ENCODE measurements at regions of chr4 and their contacts with region 1.

Region 1: DNA sequence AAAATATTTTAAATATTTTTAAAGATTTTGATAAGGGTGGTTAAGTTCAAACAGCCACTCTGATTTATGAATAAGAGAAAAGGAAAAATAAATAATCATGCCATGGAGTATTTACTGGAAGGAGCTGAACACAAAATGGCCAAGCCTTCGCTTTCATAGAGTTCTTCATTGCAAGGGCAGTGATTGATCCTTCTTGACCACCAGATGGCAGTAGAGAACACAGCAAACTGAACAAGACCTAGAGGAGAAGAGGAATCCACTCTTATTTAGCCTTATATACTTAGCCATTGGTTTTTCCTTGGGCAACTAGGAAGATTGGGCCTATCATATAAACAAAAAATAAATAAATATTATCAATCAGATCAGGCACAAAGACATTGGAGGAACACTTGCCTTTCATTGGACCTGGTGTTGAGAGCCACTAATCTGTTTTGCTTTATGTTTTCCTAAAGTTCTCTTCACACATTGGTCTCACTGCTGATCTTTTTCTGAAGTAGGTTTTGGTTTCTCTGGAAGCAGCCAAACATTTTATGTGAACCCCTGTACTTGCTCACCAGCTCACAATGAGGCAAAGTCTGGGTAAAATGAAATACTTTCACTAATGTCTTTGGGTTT is 58.1 kb upstream of the PARM1 start:
- DNase-seq: no peak
- ATAC-seq: peak; percentile 84

Region 2: DNA sequence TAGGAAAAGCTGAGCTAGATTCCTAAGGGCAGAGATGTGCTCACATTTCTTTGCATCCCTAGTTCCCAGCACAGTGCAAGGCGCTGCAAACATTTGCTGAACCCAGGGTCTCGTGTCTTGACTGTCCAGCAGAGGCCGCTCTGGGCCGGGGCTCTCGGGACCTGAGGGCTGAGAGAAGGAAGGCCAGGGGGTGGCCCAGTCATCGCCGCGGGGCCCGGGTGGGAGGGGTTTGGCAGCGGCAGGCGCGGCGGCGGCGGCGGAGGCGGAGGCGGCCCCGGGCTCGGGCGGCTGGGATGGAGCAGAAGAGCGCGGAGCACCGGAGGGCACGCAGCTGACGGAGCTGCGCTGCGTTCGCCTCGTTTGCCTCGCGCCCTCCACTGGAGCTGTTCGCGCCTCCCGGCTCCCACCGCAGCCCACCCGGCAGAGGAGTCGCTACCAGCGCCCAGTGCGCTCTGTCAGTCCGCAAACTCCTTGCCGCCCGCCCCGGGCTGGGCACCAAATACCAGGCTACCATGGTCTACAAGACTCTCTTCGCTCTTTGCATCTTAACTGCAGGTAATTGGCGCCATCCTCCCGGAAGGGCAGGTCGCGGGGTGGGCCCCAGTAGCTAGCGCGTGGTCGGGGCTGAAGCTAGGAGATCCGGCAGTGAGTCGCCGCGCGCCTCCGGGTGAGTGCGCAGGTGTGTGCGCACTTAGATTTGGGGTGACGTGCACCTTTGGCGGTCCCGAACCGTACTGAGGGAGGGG is 58.1 kb after region 1 on chr4 and contains the start of gene PARM1:
- intact Hi-C with region 1: loop called (anchors 2 kb)
- DNase-seq: peak; percentile 95
- ATAC-seq: peak; percentile 98
- total RNA-seq, gene PARM1: 107 TPM

Region 3: DNA sequence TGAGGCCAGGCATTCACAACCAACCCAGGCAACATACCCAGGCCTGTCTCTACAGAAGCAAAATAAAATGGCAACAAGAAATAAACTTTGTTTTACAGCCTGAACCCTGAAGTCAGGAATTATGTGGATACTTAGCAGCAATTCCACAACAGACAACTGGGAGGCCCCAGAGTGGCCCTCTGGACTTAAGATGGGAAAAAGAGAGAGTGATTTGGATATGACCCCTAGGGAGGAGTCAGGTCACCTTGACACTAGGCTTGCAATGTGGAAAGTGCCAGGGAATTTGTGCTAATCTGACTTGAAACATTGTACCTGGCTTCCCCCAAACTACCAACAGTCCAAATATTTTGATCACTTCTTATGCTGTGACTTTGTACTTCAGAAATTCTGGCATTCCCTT is 251.2 kb after region 1 on chr4:
- intact Hi-C with region 1: loop called (anchors 10 kb)
- DNase-seq: no peak
- ATAC-seq: no peak